ENCODE measurements at regions of chr1 and their contacts with region 1.

Region 1: GRCh38 chr1:45303582-45304310 is 22.9 kb upstream of the HPDL start:
- DNase-seq: peak; percentile 94
- H3K4me3 Mint-ChIP-seq: peak overlapping the region; percentile 81
- H3K27ac Mint-ChIP-seq: peak overlapping the region; percentile 78
- H3K4me1 Mint-ChIP-seq: peaks cover 8% of the 10 kb centered on the region
- H3K27me3 Mint-ChIP-seq: no peaks in the 10 kb centered on the region
- CTCF ChIP-seq: peak; percentile 70

Region 2: GRCh38 chr1:44707959-44708831 is 595.6 kb before region 1 on chr1:
- CTCF ChIA-PET with region 1: no interaction called
- intact Hi-C with region 1: no loop called
- DNase-seq: peak; percentile 45
- H3K4me3 Mint-ChIP-seq: peak overlapping the region; percentile 13
- H3K27ac Mint-ChIP-seq: peak overlapping the region; percentile 28
- H3K4me1 Mint-ChIP-seq: peaks cover 13% of the 10 kb centered on the region
- H3K27me3 Mint-ChIP-seq: no peaks in the 10 kb centered on the region
- CTCF ChIP-seq: peak; percentile 24

Region 3: DNA sequence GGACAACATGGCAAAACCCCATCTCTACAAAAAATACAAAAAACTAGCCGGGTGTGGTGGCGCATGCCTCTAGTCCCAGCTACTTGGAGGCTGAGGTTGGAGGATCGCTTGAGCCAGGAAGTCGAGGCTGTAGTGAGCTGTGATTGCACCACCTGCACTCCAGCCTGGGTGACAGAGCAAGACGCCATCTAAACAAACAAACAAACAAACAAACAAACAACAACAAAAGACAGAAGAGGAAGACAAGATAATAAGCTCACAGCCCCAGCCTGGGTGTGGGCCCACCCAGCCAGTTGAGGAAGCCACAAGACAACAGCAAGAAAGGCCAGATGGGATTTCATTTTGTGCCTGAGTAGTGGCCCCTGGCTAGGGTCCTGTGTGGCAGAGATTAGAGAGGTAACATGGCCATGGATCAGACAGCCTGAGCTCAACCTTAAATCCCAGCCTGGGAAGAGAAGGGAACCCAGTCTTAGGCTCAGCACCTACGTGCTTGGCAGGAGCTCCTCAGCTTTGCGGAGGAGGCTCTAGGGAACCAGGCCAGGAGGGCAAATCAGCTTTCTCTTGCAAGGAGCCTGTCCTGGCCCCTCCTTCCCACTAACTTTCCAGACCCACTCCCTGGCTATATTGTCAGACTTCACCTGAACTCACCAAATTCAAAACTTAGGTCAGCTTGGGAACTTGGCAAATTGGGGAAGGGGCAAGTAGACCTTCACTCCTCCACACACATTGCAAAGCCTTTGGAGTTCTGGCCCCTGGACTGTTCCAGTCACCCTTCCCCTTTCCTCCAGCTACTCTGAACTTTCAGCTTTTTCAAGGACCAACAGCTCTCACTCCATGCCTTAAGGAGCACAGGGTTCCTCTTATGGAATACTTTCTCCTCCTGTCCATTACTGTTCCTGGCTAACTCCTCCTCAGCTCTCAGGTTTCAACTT is 510.7 kb before region 1 on chr1:
- CTCF ChIA-PET with region 1: interaction called, 3 read pairs
- intact Hi-C with region 1: loop called (anchors 5 kb)
- DNase-seq: no peak
- H3K4me3 Mint-ChIP-seq: no peak overlapping the region
- H3K27ac Mint-ChIP-seq: no peak overlapping the region
- H3K4me1 Mint-ChIP-seq: peaks cover 8% of the 10 kb centered on the region
- H3K27me3 Mint-ChIP-seq: no peaks in the 10 kb centered on the region
- CTCF ChIP-seq: no peak

Region 4: GRCh38 chr1:45018599-45019230 is 285.0 kb before region 1 on chr1:
- CTCF ChIA-PET with region 1: interaction called, 23 read pairs
- intact Hi-C with region 1: loop called (anchors 1 kb)
- DNase-seq: peak; percentile 74
- H3K4me3 Mint-ChIP-seq: no peak overlapping the region
- H3K27ac Mint-ChIP-seq: no peak overlapping the region
- H3K4me1 Mint-ChIP-seq: no peaks in the 10 kb centered on the region
- H3K27me3 Mint-ChIP-seq: no peaks in the 10 kb centered on the region
- CTCF ChIP-seq: peak; percentile 82

Region 5: DNA sequence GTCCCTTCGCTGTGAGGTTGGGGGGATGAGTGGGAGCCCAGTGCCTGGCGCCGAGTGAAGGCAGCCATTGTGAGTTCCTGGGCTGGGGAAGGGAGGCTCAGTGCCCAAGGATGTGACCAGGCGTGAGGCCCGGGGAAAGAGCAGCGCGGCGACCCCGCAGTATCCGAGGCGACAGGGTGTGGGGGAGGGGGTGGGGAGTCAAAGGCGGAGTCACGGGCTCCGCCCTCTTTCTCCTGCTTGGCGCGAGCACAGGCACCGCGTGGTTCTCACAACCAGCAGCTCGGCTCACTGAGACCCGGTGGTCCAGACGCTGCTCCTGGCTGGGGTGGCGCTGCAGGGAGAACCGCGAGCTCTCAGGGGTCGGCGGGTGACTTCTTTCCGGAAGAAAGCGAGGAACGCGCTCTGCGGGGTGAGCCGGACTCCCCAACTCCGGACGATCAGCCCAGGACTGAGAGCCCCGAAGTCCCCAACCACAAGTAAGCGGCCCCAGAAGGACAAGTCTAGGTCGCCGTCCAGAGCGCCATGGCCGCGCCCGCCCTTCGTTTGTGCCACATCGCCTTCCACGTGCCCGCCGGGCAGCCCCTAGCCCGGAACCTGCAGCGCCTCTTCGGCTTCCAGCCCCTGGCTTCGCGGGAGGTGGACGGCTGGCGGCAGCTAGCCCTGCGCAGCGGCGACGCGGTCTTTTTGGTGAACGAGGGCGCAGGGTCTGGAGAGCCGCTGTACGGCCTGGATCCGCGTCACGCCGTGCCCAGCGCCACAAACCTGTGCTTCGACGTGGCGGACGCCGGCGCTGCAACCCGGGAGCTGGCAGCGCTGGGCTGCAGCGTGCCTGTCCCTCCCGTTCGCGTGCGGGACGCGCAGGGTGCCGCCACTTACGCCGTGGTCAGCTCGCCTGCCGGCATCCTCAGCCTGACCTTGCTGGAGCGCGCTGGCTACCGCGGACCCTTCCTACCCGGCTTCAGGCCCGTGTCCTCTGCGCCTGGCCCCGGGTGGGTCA is 23.2 kb after region 1 on chr1 and contains the start of gene HPDL:
- CTCF ChIA-PET with region 1: interaction called, 10 read pairs
- intact Hi-C with region 1: no loop called
- DNase-seq: peak; percentile 62
- H3K4me3 Mint-ChIP-seq: peak within 1 kb of the TSS; percentile 72
- H3K27ac Mint-ChIP-seq: peak within 1 kb of the TSS; percentile 33
- H3K4me1 Mint-ChIP-seq: peaks cover 22% of the 10 kb centered on the region
- H3K27me3 Mint-ChIP-seq: no peaks in the 10 kb centered on the region
- CTCF ChIP-seq: no peak
- total RNA-seq, gene HPDL: 8.4 and 9.7 TPM in 2 replicates

Region 6: GRCh38 chr1:45339789-45340570 is 36.2 kb after region 1 on chr1 and contains the starts of genes MUTYH and TOE1:
- CTCF ChIA-PET with region 1: interaction called, 30 read pairs
- intact Hi-C with region 1: no loop called
- DNase-seq: peak; percentile 98
- H3K4me3 Mint-ChIP-seq: peak within 1 kb of the TSS; percentile 84
- H3K27ac Mint-ChIP-seq: peak within 1 kb of the TSS; percentile 75
- H3K4me1 Mint-ChIP-seq: peaks cover 38% of the 10 kb centered on the region
- H3K27me3 Mint-ChIP-seq: no peaks in the 10 kb centered on the region
- CTCF ChIP-seq: no peak
- total RNA-seq, gene MUTYH: 48.1 and 53.1 TPM in 2 replicates
- total RNA-seq, gene TOE1: 14.2 TPM in 2 replicates

Region 7: GRCh38 chr1:45470306-45470798 is 166.6 kb after region 1 on chr1:
- CTCF ChIA-PET with region 1: no interaction called
- intact Hi-C with region 1: no loop called
- DNase-seq: no peak
- H3K4me3 Mint-ChIP-seq: no peak overlapping the region
- H3K27ac Mint-ChIP-seq: no peak overlapping the region
- H3K4me1 Mint-ChIP-seq: no peaks in the 10 kb centered on the region
- H3K27me3 Mint-ChIP-seq: no peaks in the 10 kb centered on the region
- CTCF ChIP-seq: no peak

Measured in Calu3 (cell line).